Activated naive CD4-positive, alpha-beta T cell treated with anti-CD3 and anti-CD28 coated beads for 36 hours (primary cell): ENCODE measurements at regions of chr1 and their contacts with region 1.

Region 1: GRCh38 chr1:17053685-17054410 is at the start of gene SDHB:
- DNase-seq: peak; percentile 100
- H3K4me3 Mint-ChIP-seq: peak within 1 kb of the TSS; percentile 98
- H3K27ac Mint-ChIP-seq: peak within 1 kb of the TSS; percentile 91
- H3K4me1 Mint-ChIP-seq: peaks cover 22% of the 10 kb centered on the region
- H3K27me3 Mint-ChIP-seq: peaks cover 5% of the 10 kb centered on the region
- total RNA-seq, gene SDHB: 177 to 179 TPM

Region 2: DNA sequence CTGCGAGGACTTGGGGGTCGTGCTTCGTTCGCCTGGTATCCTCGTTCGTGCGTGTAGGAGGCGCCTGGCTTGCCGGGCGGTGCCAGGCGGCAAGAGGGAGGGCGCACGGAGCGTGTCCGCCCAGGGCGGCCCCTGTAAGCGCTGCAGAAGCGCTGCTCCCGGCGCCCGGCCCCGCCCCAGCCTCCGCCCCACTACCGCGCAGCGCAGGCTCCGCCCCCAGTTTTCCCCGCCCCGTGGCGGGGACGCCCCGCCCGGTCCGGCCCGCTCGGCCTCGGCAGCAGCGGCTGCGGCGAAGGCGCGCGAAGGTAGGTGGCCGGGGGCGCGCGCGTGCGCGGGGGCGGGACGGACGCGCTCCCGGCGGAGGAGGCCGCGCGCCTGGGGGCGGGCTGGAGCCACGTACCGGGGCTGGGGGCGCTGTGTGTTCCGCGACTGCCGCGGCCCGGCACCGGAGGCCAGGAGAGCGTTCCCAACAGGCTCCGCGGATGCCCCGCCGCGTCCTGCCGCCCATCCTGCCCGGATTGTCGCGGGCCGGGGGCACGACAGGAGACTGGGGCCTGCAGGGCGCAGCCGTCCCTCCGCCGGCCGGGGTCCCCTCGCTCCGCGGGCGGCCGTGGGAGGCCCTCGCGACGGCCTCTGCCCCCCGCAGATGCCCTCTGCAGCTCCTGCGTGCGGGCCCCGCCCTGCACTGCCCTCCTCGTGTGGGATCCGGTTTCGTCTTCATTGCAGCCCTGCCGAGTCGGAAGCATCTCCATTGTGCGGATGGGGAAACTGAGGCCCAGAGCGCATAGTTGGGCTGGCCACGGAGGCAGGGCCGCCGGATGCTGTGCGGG is 139.8 kb before region 1 on chr1:
- CTCF ChIA-PET with region 1: no interaction called
- intact Hi-C with region 1: loop called (anchors 5 kb)
- DNase-seq: peak; percentile 92
- H3K4me3 Mint-ChIP-seq: peak overlapping the region; percentile 88
- H3K27ac Mint-ChIP-seq: peak overlapping the region; percentile 77
- H3K4me1 Mint-ChIP-seq: peaks cover 30% of the 10 kb centered on the region
- H3K27me3 Mint-ChIP-seq: no peaks in the 10 kb centered on the region

Region 3: GRCh38 chr1:17011439-17012307 is 42.2 kb before region 1 on chr1 and contains the start of gene ATP13A2:
- CTCF ChIA-PET with region 1: no interaction called
- intact Hi-C with region 1: loop called (anchors 1 kb)
- DNase-seq: peak; percentile 77
- H3K4me3 Mint-ChIP-seq: peak within 1 kb of the TSS; percentile 81
- H3K27ac Mint-ChIP-seq: no peak within 1 kb of the TSS
- H3K4me1 Mint-ChIP-seq: peaks cover 17% of the 10 kb centered on the region
- H3K27me3 Mint-ChIP-seq: no peaks in the 10 kb centered on the region
- total RNA-seq, gene ATP13A2: 23.6 to 25.0 TPM

Region 4: DNA sequence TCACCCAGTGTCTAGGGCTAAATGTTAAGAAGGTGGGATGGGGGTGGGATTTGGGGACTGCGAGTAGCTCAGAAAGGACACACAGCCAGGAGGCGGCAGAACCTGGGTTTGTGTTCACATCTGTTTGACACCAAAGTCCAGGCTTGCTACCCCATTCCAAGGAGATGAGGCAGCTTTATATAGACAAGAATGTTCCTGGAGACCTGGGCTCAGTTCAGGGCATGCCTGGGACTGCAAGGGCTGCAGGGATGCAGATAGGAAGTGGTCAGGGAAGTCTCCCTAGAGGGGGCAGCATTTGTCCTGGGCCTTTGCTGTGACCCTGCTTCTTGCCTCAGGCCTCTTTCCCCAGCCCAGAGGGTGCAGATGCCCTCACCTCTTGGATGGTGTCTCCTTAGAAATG is 211.3 kb after region 1 on chr1:
- CTCF ChIA-PET with region 1: no interaction called
- intact Hi-C with region 1: no loop called
- DNase-seq: no peak
- H3K4me3 Mint-ChIP-seq: no peak overlapping the region
- H3K27ac Mint-ChIP-seq: no peak overlapping the region
- H3K4me1 Mint-ChIP-seq: no peaks in the 10 kb centered on the region
- H3K27me3 Mint-ChIP-seq: no peaks in the 10 kb centered on the region